Activated CD4-positive, alpha-beta T cell treated with anti-CD3 and anti-CD28 coated beads for 36 hours (primary cell): ENCODE measurements at regions of chr21 and their contacts with region 1.

Region 1: GRCh38 chr21:36141513-36141925 is 6.6 kb downstream of the CBR3 start:
- DNase-seq: peak; percentile 92
- ATAC-seq: peak; percentile 96
- H3K4me3 Mint-ChIP-seq: no peak overlapping the region
- H3K27ac Mint-ChIP-seq: peak overlapping the region; percentile 29
- H3K4me1 Mint-ChIP-seq: peaks cover 25% of the 10 kb centered on the region
- H3K27me3 Mint-ChIP-seq: no peaks in the 10 kb centered on the region

Region 2: GRCh38 chr21:35995522-35996088 is 145.9 kb before region 1 on chr21:
- CTCF ChIA-PET with region 1: no interaction called
- POLR2A ChIA-PET with region 1: no interaction called
- intact Hi-C with region 1: no loop called
- DNase-seq: peak; percentile 15
- ATAC-seq: peak; percentile 36
- H3K4me3 Mint-ChIP-seq: no peak overlapping the region
- H3K27ac Mint-ChIP-seq: no peak overlapping the region
- H3K4me1 Mint-ChIP-seq: peaks cover 15% of the 10 kb centered on the region
- H3K27me3 Mint-ChIP-seq: peaks cover 28% of the 10 kb centered on the region

Region 3: DNA sequence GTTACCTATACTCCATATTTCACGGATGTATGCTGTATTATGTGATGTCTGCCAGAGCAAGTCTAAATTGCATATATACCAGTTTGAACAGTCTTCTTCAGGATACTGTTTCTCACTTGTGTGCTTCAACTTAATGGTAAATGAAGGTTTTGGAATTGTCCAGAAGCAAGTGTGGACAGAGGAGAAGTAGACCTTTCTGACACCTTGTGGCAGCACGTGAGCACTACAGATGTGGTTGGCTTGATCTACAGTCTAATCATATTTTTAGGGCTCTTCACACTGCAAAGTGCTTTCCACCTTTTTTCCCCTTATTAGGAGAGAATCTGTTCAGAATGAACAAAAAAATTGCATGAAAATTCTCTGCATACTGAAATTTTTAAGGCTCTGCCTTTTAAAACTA is 189.4 kb after region 1 on chr21:
- CTCF ChIA-PET with region 1: interaction called, 6 read pairs
- POLR2A ChIA-PET with region 1: no interaction called
- intact Hi-C with region 1: loop called (anchors 1 kb)
- DNase-seq: peak; percentile 67
- ATAC-seq: peak; percentile 92
- H3K4me3 Mint-ChIP-seq: no peak overlapping the region
- H3K27ac Mint-ChIP-seq: no peak overlapping the region
- H3K4me1 Mint-ChIP-seq: peaks cover 42% of the 10 kb centered on the region
- H3K27me3 Mint-ChIP-seq: no peaks in the 10 kb centered on the region